ENCODE measurements at regions of chr19 and their contacts with region 1.

Region 1: DNA sequence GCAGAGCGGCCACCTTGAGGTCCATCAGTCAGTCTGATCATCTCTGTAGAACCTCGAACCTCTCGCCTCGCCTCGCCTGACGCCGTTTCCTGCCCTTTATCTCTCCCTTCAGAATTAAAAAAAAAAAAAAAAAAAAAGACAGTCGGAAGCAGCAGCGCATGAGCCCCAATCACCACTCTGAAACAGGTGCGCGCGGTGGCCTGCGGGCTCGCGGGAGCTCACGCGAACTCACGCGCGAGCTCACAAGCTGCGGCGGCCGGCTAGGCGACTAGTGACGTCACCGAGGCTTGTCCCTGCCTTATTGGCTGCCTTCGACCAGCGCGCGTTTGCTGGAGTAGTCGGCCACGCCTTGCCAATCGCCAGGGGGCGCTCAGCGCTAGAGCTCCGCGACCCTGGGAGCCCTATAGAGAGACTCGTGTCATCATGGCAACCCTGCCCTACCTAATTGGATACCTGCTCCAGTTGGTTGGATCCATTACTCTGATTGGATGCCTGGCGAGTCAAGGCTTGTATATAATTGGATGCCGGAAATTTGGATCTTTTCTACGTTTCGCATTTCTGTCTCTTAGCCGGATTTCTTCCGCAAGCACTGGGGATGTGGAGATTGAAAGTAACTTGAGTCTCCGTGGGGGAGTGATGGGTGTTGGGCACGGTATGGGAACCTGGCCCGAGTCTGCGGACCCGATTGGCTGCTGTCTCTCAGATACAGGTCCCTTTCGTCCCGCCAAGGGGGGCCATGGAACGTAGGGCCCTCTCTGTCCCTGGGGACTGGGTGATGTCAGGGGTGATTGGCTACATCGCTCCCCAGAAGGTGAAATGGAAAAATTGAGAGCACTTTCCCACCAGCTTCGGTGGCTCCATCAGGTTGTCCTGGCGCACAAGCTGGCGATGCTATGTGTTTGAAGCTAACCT is 31.6 kb downstream of the SYT3 start:
- DNase-seq: peak; percentile 93 to 100 (median 99)

Region 2: GRCh38 chr19:50551715-50552187 is 56.4 kb before region 1 on chr19:
- intact Hi-C with region 1: no loop called
- DNase-seq: peak in 40 of 42 donors; percentile 41 to 93 (median 78)

Region 3: GRCh38 chr19:50785329-50785728 is 177.2 kb after region 1 on chr19:
- intact Hi-C with region 1: loop called (anchors 5 kb)
- DNase-seq: no peak